ENCODE measurements at regions of chr7 and their contacts with region 1.

Region 1: DNA sequence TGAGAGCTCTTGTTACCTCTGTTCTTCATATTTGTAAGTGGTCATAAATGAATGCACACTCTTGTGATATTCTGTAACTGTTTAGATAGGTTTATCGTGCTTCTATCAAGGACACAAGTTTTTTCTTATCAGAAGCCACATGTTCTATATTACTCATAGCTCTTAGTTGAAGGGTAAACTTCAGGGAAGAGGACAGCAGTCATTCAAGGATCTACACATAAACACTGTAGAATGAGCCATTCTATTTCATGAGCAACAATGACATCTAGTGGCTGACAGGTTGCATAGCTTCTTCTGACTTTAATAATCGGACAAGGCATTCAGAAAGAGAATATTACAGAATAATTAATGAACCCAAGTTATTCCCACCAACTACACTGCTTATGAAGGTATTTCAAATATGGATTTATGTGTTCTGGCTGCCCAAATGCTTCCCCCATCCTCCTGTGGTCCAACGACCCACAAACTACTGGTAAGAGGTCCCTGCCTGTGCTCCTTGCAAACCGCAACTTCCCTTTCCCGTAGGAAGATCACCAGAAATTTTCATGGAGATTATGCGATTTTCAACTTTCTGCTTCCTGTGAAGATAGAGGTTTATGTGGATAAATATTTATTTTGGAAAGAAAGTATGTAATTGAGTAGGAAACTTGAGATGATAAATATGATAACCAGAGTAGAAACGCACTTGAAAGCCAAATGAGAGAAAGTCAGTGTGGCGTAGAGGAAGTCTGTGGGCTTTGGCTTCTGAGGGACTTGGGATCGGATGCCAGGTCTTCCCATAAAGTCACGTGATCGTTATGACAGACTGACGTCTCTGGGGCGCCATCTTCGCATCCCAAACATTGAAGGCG is 16.8 kb upstream of the ABCB5 start:
- DNase-seq: no peak
- H3K4me3 ChIP-seq: no peak overlapping the region
- H3K27me3 ChIP-seq: no peaks in the 10 kb centered on the region
- CTCF ChIP-seq: peak; percentile 71

Region 2: DNA sequence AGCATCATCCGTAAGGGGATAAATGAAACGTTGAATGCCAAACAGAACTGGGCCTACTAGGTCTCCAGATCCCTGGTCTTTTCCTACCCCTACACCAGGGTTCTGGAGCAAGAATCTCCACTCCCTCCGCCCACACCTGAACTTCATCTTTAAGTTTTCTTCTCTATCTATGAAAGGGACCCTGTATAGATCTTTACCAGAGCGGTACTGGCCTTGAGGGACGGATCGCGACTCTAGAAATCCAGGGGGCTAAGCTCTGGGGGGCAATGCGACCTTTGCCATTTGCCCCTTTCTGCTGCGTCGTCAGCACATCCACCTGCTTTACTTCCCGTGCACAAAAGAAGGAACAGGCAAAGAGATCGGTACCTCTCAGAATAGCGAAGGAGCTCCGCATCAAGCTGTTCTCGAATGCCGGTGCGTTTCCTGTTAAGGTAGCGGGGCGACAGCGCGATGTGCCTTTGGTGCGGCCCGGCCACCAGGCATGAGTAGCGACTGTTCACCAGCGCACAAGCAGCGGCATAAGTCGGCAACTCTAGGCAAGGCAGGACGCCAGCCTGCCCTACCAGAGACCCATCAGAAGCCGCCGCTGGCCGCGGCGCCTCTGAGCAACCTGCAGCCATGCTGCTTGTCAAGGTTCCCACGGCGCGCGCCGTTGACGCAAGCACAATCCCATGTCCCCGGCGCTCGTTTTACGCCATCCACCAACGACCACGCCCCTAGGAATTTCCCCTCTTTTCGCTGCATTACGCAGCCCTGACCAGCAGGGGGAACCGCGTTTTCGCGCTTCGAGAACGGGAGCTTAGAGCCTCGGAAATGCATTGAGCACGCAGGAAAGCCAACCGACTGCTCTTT is 890.1 kb before region 1 on chr7 and contains the start of gene POLR1F:
- CTCF ChIA-PET with region 1: interaction called, 121 read pairs
- POLR2A ChIA-PET with region 1: no interaction called
- DNase-seq: peak; percentile 71
- H3K4me3 ChIP-seq: peak within 1 kb of the TSS; percentile 89
- H3K27me3 ChIP-seq: no peaks in the 10 kb centered on the region; the same call in 1 of the 2 replicates
- CTCF ChIP-seq: peak; percentile 95
- polyA plus RNA-seq, gene POLR1F: 5.1 and 14.0 TPM in 2 replicates

Region 3: GRCh38 chr7:19747740-19748339 is 850.8 kb before region 1 on chr7:
- CTCF ChIA-PET with region 1: interaction called, 46 read pairs
- POLR2A ChIA-PET with region 1: no interaction called
- DNase-seq: no peak
- H3K4me3 ChIP-seq: no peak overlapping the region
- H3K27me3 ChIP-seq: no peaks in the 10 kb centered on the region
- CTCF ChIP-seq: peak; percentile 53

Region 4: GRCh38 chr7:19982841-19983835 is 615.5 kb before region 1 on chr7:
- CTCF ChIA-PET with region 1: interaction called, 32 read pairs
- POLR2A ChIA-PET with region 1: no interaction called
- DNase-seq: peak; percentile 7
- H3K4me3 ChIP-seq: no peak overlapping the region
- H3K27me3 ChIP-seq: no peaks in the 10 kb centered on the region
- CTCF ChIP-seq: peak; percentile 61

Region 5: DNA sequence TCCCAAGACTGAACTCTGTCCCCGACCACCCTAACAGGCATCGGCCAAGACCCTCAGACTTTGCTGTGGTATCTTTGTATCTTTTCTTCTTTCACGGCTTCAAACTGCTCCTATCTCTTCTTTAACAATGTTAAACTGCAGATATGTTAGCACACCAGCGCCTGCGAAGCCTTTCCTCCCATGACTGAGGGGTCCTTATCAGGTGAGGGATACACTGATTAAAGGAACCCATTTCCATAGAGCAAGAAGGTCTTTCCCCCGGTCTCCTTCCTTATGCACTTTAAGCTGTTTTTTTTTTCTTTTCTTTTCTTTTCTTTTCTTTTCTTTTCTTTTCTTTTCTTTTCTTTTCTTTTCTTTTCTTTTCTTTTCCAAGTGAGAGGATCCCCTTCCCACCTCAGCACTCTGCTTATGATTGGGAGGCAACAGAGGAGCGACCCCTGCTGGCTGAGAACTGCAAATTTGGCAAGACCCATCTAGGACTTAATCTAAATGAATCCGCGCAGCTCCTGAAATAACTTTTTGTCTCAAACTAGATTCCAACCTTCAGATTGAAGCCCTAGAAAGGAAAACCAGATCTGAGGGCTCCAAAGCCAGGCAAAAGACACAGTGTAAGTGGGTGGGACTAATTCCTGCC is 158.1 kb before region 1 on chr7:
- CTCF ChIA-PET with region 1: interaction called, 18 read pairs
- POLR2A ChIA-PET with region 1: no interaction called
- DNase-seq: no peak
- H3K4me3 ChIP-seq: no peak overlapping the region
- H3K27me3 ChIP-seq: no peaks in the 10 kb centered on the region
- CTCF ChIP-seq: peak; percentile 51